ENCODE measurements at regions of chr1 and their contacts with region 1.

Region 1: DNA sequence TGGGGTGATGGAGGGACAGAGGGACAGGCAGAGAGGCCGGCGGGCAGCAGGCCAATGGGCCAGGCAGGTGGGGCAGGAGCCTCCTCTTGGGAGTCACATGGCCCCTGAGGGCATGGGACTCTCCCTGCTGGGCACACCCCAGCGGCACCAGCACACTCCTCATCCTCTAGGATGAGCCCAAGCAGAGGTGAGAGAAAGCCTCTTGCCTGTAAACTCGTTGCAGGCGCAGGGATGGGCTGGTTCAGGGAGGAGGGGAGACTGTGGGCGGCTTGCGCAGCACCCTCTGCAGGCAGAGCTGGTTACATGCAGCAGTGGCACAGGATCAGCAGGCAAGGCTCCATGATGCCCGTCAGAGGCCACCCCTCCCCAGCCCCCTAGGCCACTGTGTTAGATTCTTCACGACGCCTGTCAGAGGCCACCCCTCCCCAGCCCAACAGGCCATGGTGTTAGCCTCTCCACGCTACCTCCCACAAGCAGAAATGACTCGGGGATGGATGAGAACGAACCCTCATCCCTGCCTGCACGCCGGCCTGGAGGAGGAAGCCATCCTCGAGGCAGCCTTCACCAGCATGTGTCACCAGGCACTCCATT is 209.7 kb upstream of the VAMP3 start:
- DNase-seq: peak; percentile 58 to 86
- H3K4me3 ChIP-seq: no peak overlapping the region
- H3K27ac ChIP-seq: no peak overlapping the region
- H3K4me1 ChIP-seq: peaks cover 0 to 1% (median 0%) of the 10 kb centered on the region in 4 experiments; a peak in 3 of 7 replicates
- H3K27me3 ChIP-seq: no peaks in the 10 kb centered on the region; a peak in 1 of 7 replicates
- CTCF ChIP-seq: peak; percentile 75 to 99 (median 97)
- EP300 ChIP-seq: no peak
- POLR2A ChIP-seq: no peak
- RAD21 ChIP-seq: peak; percentile 62 to 69

Region 2: GRCh38 chr1:7549277-7550161 is 11.9 kb before region 1 on chr1:
- CTCF ChIA-PET with region 1: interaction called, 11 read pairs
- POLR2A ChIA-PET with region 1: interaction called, 3 read pairs
- DNase-seq: no peak
- H3K4me3 ChIP-seq: no peak overlapping the region
- H3K27ac ChIP-seq: no peak overlapping the region
- H3K4me1 ChIP-seq: peaks cover 0 to 14% (median 6%) of the 10 kb centered on the region in 4 experiments; a peak in 6 of 7 replicates
- H3K27me3 ChIP-seq: no peaks in the 10 kb centered on the region
- CTCF ChIP-seq: no peak
- EP300 ChIP-seq: no peak
- POLR2A ChIP-seq: no peak
- RAD21 ChIP-seq: no peak

Measured in H1 (cell line).